Mammary epithelial cell (primary cell): ENCODE measurements at regions of chr19 and their contacts with region 1.

Region 1: DNA sequence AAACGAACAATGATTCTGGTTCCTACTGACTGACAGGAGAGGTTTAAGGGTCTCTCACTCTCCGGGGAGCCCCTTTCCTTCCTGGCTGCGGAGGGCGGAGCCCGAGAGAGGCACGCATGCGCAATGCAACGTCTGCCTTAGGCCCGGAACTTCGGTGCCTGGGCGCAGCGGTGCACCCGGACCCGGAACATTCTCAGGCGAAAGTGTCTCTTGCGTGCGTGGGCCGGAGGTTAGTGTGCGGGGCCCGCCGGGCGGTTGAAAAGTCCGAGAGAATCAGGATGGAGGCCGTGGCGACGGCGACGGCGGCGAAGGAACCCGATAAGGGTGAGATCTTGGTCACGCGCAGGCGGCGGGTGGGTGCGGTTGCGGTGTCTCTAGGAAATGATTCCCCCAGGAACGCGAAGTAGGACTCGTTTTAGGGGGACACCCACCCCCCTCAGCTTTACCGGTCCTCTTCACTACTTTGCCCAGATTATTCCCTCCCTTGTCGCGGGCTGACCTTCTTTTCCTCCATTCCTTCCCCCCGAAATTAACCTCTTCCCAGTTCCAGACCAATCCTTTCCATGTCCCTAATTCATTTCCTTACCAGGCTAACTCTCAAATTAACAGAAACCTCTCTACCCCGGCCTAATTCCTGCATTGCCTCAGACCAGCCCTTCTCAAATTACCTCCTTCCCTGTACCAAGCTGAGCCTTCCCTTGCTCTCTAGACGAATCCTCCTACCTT is at the start of gene CCDC97:
- DNase-seq: peak; percentile 83
- H3K4me3 ChIP-seq: peak within 1 kb of the TSS; percentile 75 to 89 (median 88)
- H3K27ac ChIP-seq: peak within 1 kb of the TSS; percentile 80
- H3K4me1 ChIP-seq: peaks cover 15% of the 10 kb centered on the region
- H3K27me3 ChIP-seq: no peaks in the 10 kb centered on the region
- CTCF ChIP-seq: peak in 1 of 2 donors; percentile 3
- total RNA-seq, gene CCDC97: 10.8 to 24.8 TPM

Region 2: GRCh38 chr19:41156207-41156606 is 154.0 kb before region 1 on chr19:
- CTCF ChIA-PET with region 1: no interaction called
- dilution Hi-C with region 1: no loop called
- in situ Hi-C with region 1: no loop called
- intact Hi-C with region 1: loop called (anchors 5 kb)
- DNase-seq: no peak
- H3K4me3 ChIP-seq: no peak overlapping the region
- H3K27ac ChIP-seq: no peak overlapping the region
- H3K4me1 ChIP-seq: no peaks in the 10 kb centered on the region
- H3K27me3 ChIP-seq: no peaks in the 10 kb centered on the region
- CTCF ChIP-seq: peak; percentile 25 to 32

Region 3: DNA sequence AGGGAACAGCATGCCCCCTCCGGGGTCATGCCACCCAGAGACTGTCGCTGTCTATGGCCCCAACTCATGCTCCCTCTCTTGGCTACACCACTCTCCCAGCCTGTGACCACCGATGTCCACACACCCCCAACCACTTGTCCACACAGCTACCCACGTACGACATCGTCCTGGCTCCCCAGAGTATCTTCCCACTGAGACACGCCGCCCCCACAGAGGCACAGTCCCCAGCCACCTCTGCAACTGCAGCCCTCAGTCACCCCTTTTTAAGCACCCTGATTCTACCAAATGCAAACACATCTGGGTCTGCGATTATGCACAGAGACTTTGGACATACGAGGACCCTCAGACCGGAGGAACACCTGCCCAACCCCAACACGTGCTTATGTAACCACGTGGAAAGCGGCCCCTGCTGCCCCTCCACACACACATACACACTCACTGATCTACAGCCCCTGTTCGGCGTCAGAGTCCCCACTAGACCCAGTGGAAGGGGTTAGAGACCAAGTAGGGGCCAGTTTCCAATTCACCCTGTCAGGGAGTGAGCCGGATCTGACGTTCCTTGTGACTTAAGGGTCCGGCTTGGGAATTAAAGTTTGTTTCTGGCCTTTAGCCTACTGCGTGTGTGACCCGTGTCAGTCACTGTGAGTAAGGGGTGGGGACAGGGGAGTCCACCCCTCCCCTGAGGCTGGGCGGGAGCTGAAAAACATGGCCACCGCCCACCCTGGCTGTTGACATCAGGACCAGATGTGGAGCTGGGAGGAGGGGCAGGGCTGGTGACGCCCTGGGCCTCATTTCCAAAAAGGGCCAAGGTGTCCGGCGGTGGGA is 103.1 kb before region 1 on chr19:
- CTCF ChIA-PET with region 1: no interaction called
- dilution Hi-C with region 1: no loop called
- in situ Hi-C with region 1: no loop called
- intact Hi-C with region 1: loop called (anchors 1 kb)
- DNase-seq: no peak
- H3K4me3 ChIP-seq: no peak overlapping the region
- H3K27ac ChIP-seq: no peak overlapping the region
- H3K4me1 ChIP-seq: no peaks in the 10 kb centered on the region
- H3K27me3 ChIP-seq: no peaks in the 10 kb centered on the region
- CTCF ChIP-seq: no peak

Region 4: DNA sequence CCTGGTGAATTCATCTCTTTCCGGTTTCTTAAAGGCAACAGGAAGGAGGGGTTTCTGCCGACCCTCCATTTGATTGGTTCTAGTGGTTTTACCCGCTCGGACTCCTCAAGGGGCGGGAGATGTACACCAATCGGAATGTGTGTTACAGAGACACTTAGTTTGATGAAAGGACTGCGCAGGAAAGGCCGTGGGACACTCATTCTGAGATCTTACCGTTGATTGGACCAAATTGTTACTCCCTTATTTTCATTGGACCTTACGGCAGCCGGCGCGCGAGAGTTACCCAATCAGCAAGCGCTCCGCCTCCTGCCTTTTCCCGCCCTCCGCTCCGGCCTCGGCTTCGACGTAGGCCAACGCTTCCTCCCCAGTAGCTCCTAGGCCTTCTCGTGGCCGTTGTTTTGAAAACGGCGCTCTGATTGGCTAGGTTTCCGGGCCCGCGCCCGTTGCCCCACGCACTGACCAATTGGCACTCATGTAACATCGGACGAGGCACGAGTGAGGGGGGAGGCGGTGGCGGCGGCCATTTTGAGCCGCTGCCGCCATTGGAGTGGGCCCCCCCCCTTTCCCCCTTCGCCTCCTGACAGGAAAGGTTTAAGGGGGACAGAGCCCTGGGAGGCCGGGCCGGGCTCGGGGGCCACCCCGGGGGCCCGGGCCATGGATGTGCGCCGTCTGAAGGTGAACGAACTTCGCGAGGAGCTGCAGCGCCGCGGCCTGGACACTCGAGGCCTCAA is 46.2 kb before region 1 on chr19 and contains the start of gene HNRNPUL1:
- CTCF ChIA-PET with region 1: no interaction called
- dilution Hi-C with region 1: no loop called
- in situ Hi-C with region 1: no loop called
- intact Hi-C with region 1: loop called (anchors 1 kb)
- DNase-seq: peak; percentile 100
- H3K4me3 ChIP-seq: peak within 1 kb of the TSS; percentile 85 to 93 (median 87)
- H3K27ac ChIP-seq: peak within 1 kb of the TSS; percentile 92
- H3K4me1 ChIP-seq: peaks cover 20% of the 10 kb centered on the region
- H3K27me3 ChIP-seq: no peaks in the 10 kb centered on the region
- CTCF ChIP-seq: peak in 1 of 2 donors; percentile 51
- total RNA-seq, gene HNRNPUL1: 80.7 to 175 TPM

Region 5: DNA sequence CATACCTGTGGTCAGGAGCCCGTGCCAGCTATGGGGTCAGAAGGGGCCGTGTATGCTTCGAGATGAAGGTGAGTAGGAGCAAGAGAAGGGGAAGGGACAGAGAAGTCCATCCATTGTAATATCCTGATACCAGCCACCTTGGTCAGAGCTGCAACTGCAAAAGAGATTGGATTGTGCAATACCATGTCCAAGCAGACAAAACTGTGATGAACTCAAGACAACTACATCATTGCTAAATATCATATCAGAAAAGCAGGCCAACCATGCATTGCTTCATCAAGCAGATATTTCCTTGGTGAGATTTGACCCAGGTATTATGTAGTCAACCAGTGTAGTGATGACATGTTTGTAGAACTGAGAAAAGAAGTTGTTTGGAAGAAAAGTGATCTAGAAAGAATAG is 34.0 kb before region 1 on chr19:
- CTCF ChIA-PET with region 1: no interaction called
- dilution Hi-C with region 1: no loop called
- in situ Hi-C with region 1: no loop called
- intact Hi-C with region 1: no loop called
- DNase-seq: no peak
- H3K4me3 ChIP-seq: no peak overlapping the region
- H3K27ac ChIP-seq: no peak overlapping the region
- H3K4me1 ChIP-seq: no peaks in the 10 kb centered on the region
- H3K27me3 ChIP-seq: no peaks in the 10 kb centered on the region
- CTCF ChIP-seq: no peak

Region 6: GRCh38 chr19:41570639-41571112 is 260.5 kb after region 1 on chr19:
- CTCF ChIA-PET with region 1: no interaction called
- dilution Hi-C with region 1: no loop called
- in situ Hi-C with region 1: loop called in 1 of 2 experiments (anchors 25 kb)
- intact Hi-C with region 1: no loop called
- DNase-seq: peak; percentile 52
- H3K4me3 ChIP-seq: no peak overlapping the region
- H3K27ac ChIP-seq: no peak overlapping the region
- H3K4me1 ChIP-seq: no peaks in the 10 kb centered on the region
- H3K27me3 ChIP-seq: peaks cover 9% of the 10 kb centered on the region
- CTCF ChIP-seq: peak; percentile 82 to 94